GM12878 (cell line): ENCODE measurements at regions of chr11 and their contacts with region 1.

Region 1: DNA sequence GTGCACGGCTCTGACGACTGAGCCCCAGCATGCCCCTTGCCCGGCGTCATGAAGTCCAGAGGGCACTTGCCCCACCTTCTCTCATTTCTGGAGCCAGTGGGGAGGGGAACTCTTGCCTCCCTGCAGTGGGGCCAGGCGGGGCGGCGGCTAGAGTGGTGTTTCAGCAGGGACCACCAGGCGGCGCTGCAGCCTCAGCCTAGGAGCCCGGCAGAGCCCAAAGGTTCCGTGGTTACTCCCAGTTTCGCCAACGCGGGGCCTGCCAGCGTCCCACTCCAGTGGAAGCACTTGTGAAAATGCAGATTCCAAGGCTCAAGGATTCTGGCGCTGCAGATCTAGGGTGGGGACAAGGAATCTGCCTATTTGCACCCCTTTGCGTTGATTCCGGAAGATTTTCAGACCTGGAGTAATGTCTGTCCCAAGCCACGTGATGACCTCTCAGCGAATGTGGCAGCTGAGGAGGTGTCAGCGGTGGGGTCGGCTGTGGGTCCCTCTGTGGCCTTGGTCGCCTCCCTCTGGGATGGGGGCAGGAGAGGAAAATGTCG is 55.7 kb downstream of the CD82 start:
- DNase-seq: no peak
- ATAC-seq: peak; percentile 66
- H3K4me3 ChIP-seq: no peak overlapping the region
- H3K27ac ChIP-seq: no peak overlapping the region
- H3K4me1 ChIP-seq: no peaks in the 10 kb centered on the region
- H3K27me3 ChIP-seq: no peaks in the 10 kb centered on the region
- CTCF ChIP-seq: peak; percentile 84 to 90 (median 87)
- EP300 ChIP-seq: no peak
- POLR2A ChIP-seq: no peak
- RAD21 ChIP-seq: peak; percentile 71

Region 2: GRCh38 chr11:44095506-44096394 is 525.5 kb before region 1 on chr11 and contains the start of gene EXT2:
- CTCF ChIA-PET with region 1: no interaction called
- POLR2A ChIA-PET with region 1: no interaction called
- RAD21 ChIA-PET with region 1: no interaction called
- SMC1A ChIA-PET with region 1: no interaction called
- in situ Hi-C with region 1: no loop called
- intact Hi-C with region 1: loop called (anchors 10 kb)
- DNase-seq: no peak
- ATAC-seq: peak; percentile 96
- H3K4me3 ChIP-seq: peak within 1 kb of the TSS; percentile 85
- H3K27ac ChIP-seq: no peak within 1 kb of the TSS
- H3K4me1 ChIP-seq: no peaks in the 10 kb centered on the region; the same call in 1 of the 2 replicates
- H3K27me3 ChIP-seq: no peaks in the 10 kb centered on the region; a peak in 1 of 4 replicates
- CTCF ChIP-seq: peak; percentile 87 to 93 (median 92)
- EP300 ChIP-seq: no peak
- POLR2A ChIP-seq: peak; percentile 77
- RAD21 ChIP-seq: no peak
- polyA plus RNA-seq, gene EXT2: 3.8 to 6.6 TPM

Region 3: DNA sequence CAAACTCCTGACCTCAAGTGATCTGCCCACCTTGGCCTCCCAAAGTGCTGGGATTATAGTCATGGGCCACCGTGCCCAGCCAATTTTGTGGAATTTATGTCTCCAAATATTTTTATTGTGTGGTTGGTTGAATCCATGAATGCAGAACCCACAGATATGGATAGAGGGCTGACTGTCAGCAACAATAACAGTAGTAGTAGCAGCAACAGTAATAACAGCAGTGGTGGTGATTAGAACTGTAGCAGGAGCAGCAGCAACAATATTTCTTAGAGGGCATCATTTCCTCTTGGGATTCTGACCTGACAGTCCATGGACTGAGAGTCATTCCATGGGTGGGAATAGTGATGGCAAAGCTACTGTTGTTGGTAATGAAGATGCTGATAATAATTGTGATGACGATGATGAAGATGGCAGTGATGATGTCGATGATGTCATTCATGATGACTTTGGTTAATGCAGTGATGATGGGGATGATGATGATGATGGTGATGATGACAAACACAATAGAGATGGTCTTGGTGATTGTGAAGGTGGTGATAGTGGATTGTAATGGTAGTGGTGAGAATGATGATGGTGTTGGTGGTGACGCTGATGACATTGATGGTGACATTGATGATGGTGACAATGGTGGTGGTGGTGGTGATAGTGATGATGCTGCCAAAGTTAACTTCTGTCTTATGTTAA is 69.6 kb before region 1 on chr11:
- CTCF ChIA-PET with region 1: interaction called, 477 read pairs
- POLR2A ChIA-PET with region 1: interaction called, 289 read pairs
- RAD21 ChIA-PET with region 1: interaction called, 190 read pairs
- SMC1A ChIA-PET with region 1: interaction called, 433 read pairs
- in situ Hi-C with region 1: no loop called
- intact Hi-C with region 1: no loop called
- DNase-seq: no peak
- ATAC-seq: no peak
- H3K4me3 ChIP-seq: no peak overlapping the region
- H3K27ac ChIP-seq: no peak overlapping the region
- H3K4me1 ChIP-seq: no peaks in the 10 kb centered on the region
- H3K27me3 ChIP-seq: no peaks in the 10 kb centered on the region
- CTCF ChIP-seq: no peak
- EP300 ChIP-seq: no peak
- POLR2A ChIP-seq: no peak
- RAD21 ChIP-seq: no peak

Region 4: GRCh38 chr11:44565211-44565952 is 55.8 kb before region 1 on chr11 and contains the start of gene CD82:
- CTCF ChIA-PET with region 1: interaction called, 477 read pairs
- POLR2A ChIA-PET with region 1: interaction called, 289 read pairs
- RAD21 ChIA-PET with region 1: interaction called, 190 read pairs
- SMC1A ChIA-PET with region 1: interaction called, 433 read pairs
- in situ Hi-C with region 1: no loop called
- intact Hi-C with region 1: no loop called
- DNase-seq: peak; percentile 84
- ATAC-seq: peak; percentile 84
- H3K4me3 ChIP-seq: peak within 1 kb of the TSS; percentile 89
- H3K27ac ChIP-seq: peak within 1 kb of the TSS; percentile 83
- H3K4me1 ChIP-seq: peaks cover 38% of the 10 kb centered on the region
- H3K27me3 ChIP-seq: no peaks in the 10 kb centered on the region
- CTCF ChIP-seq: peak in 2 of 3 experiments; percentile 17 to 32; a peak in 2 of 6 replicates
- EP300 ChIP-seq: no peak
- POLR2A ChIP-seq: peak; percentile 96
- RAD21 ChIP-seq: no peak
- polyA plus RNA-seq, gene CD82: 5.2 to 8.2 TPM

Region 5: DNA sequence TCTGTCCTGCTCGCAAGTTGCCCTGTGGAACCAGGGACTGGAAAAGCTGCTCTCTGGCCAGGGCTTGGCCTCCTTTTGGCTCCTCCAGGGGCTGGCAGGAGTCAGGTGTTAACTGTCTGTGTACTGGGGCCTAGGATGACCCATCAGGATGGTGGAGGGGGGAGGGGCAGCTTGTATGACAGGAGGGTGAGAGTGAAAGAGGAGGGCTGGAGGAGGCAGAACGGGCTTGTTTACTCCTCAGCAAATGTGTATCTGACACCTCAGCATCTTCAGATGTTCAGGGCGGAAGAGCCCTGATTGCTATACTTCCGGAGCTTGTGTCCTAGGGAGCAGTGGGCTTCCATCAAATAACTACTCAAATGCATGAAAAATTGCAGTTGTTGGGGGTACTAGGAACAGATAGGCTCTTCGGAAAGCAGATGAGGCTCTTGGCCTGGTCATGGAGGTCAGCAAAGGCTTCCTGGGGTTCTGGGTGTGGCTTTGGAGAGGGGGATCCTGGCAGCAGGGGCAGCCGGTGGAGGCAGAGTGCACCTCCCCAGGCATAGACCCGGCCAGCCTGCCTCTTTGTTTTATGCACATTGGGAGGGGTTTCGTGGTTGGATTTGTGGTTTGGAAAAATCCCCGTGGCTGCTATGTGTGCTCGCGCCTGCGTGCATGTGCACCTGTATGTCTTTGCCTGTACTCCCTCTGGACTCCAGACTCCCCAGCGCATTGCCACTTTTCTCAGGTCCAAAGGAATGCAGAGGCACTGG is 24.5 kb before region 1 on chr11:
- CTCF ChIA-PET with region 1: interaction called, 38 read pairs
- POLR2A ChIA-PET with region 1: interaction called, 10 read pairs
- RAD21 ChIA-PET with region 1: interaction called, 12 read pairs
- SMC1A ChIA-PET with region 1: interaction called, 12 read pairs
- in situ Hi-C with region 1: no loop called
- intact Hi-C with region 1: no loop called
- DNase-seq: peak; percentile 84
- ATAC-seq: peak; percentile 73
- H3K4me3 ChIP-seq: peak overlapping the region; percentile 49; the same call in 1 of the 2 replicates
- H3K27ac ChIP-seq: peak overlapping the region; percentile 91
- H3K4me1 ChIP-seq: peaks cover 71% of the 10 kb centered on the region
- H3K27me3 ChIP-seq: no peaks in the 10 kb centered on the region
- CTCF ChIP-seq: no peak
- EP300 ChIP-seq: no peak
- POLR2A ChIP-seq: peak; percentile 63; the same call in 1 of the 2 replicates
- RAD21 ChIP-seq: no peak

Region 6: DNA sequence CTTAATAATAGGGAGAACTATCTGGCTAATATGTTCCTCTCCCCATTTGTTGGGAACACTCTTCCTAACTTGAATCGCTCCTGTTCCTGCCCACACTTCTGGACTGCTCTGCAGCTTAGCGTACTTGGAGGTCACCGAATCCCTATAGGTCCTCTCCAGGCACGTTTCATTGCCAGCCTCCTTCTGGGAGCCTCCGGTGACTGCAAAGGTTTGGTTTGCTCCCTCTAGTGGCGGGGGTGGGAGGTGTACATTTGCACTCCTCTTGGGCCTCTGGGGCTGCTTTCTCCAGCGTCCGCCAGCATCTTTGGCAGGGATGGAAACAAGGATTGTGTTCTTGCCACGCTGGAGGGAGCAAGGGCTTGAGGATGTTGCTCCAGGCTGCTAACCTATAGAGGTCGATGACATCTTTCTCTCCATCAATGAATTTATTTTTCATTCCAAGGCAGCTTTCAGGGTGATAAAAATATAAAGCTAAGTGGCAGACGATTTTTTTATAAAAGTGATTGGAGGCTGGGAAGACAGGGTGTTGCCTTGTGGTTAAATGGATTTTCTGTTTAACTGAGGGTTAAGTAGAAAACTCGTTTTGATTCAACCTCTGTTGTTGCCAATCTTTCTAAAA is 154.3 kb after region 1 on chr11:
- CTCF ChIA-PET with region 1: interaction called, 9 read pairs
- POLR2A ChIA-PET with region 1: no interaction called
- RAD21 ChIA-PET with region 1: interaction called, 5 read pairs
- SMC1A ChIA-PET with region 1: interaction called, 4 read pairs
- in situ Hi-C with region 1: no loop called
- intact Hi-C with region 1: loop called (anchors 5 kb)
- DNase-seq: no peak
- ATAC-seq: peak; percentile 94
- H3K4me3 ChIP-seq: no peak overlapping the region
- H3K27ac ChIP-seq: no peak overlapping the region
- H3K4me1 ChIP-seq: no peaks in the 10 kb centered on the region
- H3K27me3 ChIP-seq: peaks cover 0 to 1% of the 10 kb centered on the region in 2 experiments; a peak in 1 of 4 replicates
- CTCF ChIP-seq: peak; percentile 70 to 84 (median 77)
- EP300 ChIP-seq: no peak
- POLR2A ChIP-seq: no peak
- RAD21 ChIP-seq: peak; percentile 52

Region 7: GRCh38 chr11:44911029-44911814 is 290.0 kb after region 1 on chr11:
- CTCF ChIA-PET with region 1: interaction called, 13 read pairs
- POLR2A ChIA-PET with region 1: no interaction called
- RAD21 ChIA-PET with region 1: interaction called, 5 read pairs
- SMC1A ChIA-PET with region 1: interaction called, 4 read pairs
- in situ Hi-C with region 1: no loop called
- intact Hi-C with region 1: loop called (anchors 1 kb)
- DNase-seq: no peak
- ATAC-seq: peak; percentile 95
- H3K4me3 ChIP-seq: no peak overlapping the region
- H3K27ac ChIP-seq: no peak overlapping the region
- H3K4me1 ChIP-seq: peaks cover 4% of the 10 kb centered on the region
- H3K27me3 ChIP-seq: no peaks in the 10 kb centered on the region; a peak in 1 of 4 replicates
- CTCF ChIP-seq: peak; percentile 68 to 77 (median 76)
- EP300 ChIP-seq: no peak
- POLR2A ChIP-seq: no peak
- RAD21 ChIP-seq: peak; percentile 83